Panc1 (cell line): ENCODE measurements at regions of chr11 and their contacts with region 1.

Region 1: DNA sequence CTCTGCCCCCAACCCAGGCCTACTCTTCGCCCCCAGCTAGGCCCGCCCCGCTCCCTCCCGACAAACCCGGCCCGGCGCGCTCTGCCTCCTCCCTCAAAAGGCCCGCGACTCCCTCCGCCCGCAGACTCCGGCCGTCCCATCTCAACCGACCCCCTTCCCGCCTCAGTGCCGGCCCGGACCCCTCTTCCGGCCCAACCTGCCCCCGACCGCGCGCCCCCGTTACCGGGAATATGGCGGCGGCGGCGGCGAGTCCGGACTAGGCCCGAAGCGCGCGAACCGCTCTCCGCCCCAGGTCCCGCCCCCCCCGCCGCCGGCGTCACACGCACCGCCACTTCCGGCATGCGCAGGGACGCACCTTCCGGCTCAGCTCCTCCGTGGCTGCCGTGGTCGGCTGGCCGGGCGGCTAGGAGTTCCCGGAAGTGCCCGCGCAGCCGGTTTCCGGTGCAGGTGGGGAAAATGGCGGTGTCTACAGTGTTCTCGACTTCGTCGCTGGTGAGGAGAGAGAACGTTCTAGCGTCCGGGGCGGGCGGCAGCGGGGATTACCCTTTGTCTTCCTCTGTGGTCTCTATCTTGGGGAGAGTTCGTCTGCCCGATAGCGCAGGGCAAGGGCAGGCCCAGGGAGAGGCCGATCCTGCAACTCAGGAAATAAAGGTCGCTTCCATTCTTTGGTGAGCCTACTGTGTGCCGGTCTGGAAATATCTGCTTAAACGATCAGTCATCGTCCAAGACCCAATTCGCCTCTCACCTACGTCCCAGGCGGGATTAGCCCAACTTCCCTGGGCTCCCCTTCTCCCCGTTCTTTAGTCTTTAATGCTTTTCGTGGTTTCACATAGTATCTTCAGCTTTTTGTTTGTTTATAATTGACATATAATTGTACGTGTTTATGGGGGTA is at the starts of genes CPSF7 and SDHAF2:
- DNase-seq: peak; percentile 48
- ATAC-seq: peak; percentile 97
- H3K4me3 ChIP-seq: peak within 1 kb of the TSS; percentile 98 to 100
- H3K27ac ChIP-seq: peak within 1 kb of the TSS; percentile 99
- H3K4me1 ChIP-seq: peaks cover 8% of the 10 kb centered on the region
- H3K27me3 ChIP-seq: no peaks in the 10 kb centered on the region
- CTCF ChIP-seq: no peak
- total RNA-seq, gene CPSF7: 96.1 TPM
- total RNA-seq, gene SDHAF2: 43.2 TPM

Region 2: DNA sequence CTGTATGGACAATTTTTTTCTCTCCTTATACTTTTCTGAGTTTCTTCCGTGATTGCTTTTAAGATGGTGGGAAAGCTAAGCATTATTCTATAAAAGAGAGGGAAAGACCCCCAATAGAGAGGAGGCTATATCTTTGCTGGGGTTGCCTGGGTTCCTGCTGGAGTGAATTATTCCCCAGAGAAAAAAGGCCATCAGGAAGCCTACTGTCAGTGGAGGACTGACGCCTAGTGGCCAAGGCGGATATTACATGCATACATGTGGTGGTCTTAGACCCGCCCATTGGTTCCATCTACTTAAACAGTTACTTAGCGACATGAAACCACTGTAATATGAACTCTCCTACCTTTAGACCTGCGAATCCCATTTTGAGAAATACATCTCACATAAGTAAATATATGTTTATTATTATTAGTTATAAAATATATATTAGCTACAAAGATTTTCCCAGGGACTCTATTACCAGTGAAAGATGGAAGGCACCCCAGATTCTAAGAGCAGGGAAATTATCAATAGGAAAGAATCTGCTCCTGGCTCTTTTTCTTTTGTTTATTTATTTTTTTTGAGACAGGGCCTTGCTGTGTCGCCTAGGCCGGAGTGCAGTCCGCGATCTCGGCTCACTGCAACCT is 242.3 kb before region 1 on chr11:
- CTCF ChIA-PET with region 1: no interaction called
- POLR2A ChIA-PET with region 1: no interaction called
- in situ Hi-C with region 1: no loop called
- intact Hi-C with region 1: no loop called
- DNase-seq: peak; percentile 58
- ATAC-seq: peak; percentile 92
- H3K4me3 ChIP-seq: no peak overlapping the region
- H3K27ac ChIP-seq: no peak overlapping the region
- H3K4me1 ChIP-seq: no peaks in the 10 kb centered on the region
- H3K27me3 ChIP-seq: no peaks in the 10 kb centered on the region
- CTCF ChIP-seq: peak; percentile 95

Region 3: DNA sequence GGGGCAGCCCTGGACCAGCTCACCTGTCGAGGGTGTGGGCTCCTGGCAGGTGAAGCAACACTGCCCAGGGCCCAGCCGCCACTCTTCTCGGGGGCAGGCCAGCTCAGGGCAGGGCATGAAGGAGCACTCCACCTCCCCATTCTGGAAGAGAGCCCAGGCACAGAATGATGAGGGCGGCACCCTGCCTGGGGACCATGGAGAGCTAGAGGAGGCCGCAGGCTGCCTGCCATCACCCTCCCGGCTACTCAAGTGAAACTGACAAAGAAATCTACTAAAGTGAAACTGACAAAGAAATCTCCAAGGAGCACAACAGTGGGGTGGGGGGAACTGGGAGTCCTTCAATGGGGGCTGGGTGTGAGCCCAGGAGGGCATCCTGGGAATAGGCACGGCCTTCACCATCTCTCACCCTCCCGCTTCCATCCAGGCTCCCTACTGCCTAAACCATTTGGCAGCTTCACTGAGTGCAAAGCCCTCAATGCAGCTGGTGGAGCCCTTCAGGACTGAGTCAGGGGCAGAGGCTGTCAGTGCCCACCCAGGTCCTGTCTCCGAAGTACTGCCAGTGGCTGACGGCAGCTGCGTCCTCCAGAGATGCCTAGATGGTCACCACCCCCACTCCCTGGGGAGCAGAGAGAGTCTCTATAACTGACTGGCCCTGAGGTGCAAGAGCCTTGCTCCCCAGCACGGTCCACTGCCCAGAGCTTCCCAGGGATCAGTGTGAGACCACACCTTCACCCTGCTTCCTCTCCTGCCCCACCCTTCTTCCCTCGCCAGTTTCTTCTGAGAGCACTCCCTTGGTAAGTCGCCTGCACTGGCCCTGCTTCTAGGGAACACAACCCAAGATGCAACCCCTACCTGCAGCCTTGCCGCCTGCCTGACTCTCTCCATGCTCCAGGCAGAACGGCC is 156.5 kb before region 1 on chr11:
- CTCF ChIA-PET with region 1: no interaction called
- POLR2A ChIA-PET with region 1: interaction called, 16 read pairs
- in situ Hi-C with region 1: no loop called
- intact Hi-C with region 1: no loop called
- DNase-seq: no peak
- ATAC-seq: peak; percentile 52
- H3K4me3 ChIP-seq: no peak overlapping the region
- H3K27ac ChIP-seq: no peak overlapping the region
- H3K4me1 ChIP-seq: no peaks in the 10 kb centered on the region
- H3K27me3 ChIP-seq: no peaks in the 10 kb centered on the region
- CTCF ChIP-seq: no peak

Region 4: GRCh38 chr11:61357233-61357893 is 72.6 kb before region 1 on chr11:
- CTCF ChIA-PET with region 1: no interaction called
- POLR2A ChIA-PET with region 1: no interaction called
- in situ Hi-C with region 1: no loop called
- intact Hi-C with region 1: no loop called
- DNase-seq: no peak
- ATAC-seq: no peak
- H3K4me3 ChIP-seq: no peak overlapping the region
- H3K27ac ChIP-seq: no peak overlapping the region
- H3K4me1 ChIP-seq: 0 out of 2 replicates have a peak, but pooled peaks cover 4% of the 10 kb centered on the region
- H3K27me3 ChIP-seq: no peaks in the 10 kb centered on the region
- CTCF ChIP-seq: no peak

Region 5: DNA sequence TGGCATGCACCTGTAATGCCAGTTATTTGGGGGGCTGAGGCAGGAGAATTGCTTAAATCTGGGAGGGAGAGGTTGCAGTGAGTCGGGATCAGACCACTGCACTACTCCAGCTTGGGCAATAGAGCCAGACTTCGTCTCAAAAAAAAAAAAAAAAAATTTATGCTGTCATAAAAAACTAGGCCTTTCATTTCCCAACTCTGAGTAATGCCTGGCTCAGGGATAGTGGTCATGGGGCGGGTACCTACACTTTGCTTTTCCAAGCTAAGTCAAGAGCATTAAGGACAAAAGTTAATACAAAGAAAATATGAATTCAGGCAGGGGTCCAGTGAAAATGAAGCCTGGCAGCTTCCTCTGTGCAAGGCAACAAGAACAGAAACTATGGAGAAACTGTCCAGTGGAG is 16.4 kb before region 1 on chr11:
- CTCF ChIA-PET with region 1: no interaction called
- POLR2A ChIA-PET with region 1: interaction called, 10 read pairs
- in situ Hi-C with region 1: no loop called
- intact Hi-C with region 1: no loop called
- DNase-seq: no peak
- ATAC-seq: no peak
- H3K4me3 ChIP-seq: no peak overlapping the region
- H3K27ac ChIP-seq: no peak overlapping the region
- H3K4me1 ChIP-seq: no peaks in the 10 kb centered on the region
- H3K27me3 ChIP-seq: no peaks in the 10 kb centered on the region
- CTCF ChIP-seq: no peak